ENCODE measurements at regions of chr10 and their contacts with region 1.

Region 1: GRCh38 chr10:69800109-69800508 is 1.6 kb upstream of the COL13A1 start:
- DNase-seq: no peak
- ATAC-seq: peak; percentile 56
- H3K4me3 ChIP-seq: no peak overlapping the region
- H3K27ac ChIP-seq: no peak overlapping the region
- H3K4me1 ChIP-seq: no peaks in the 10 kb centered on the region
- H3K27me3 ChIP-seq: no peaks in the 10 kb centered on the region

Region 2: GRCh38 chr10:69639291-69640195 is 160.6 kb before region 1 on chr10:
- intact Hi-C with region 1: loop called (anchors 2 to 5 kb)
- DNase-seq: peak; percentile 74 to 82
- ATAC-seq: no peak
- H3K4me3 ChIP-seq: no peak overlapping the region
- H3K27ac ChIP-seq: no peak overlapping the region
- H3K4me1 ChIP-seq: no peaks in the 10 kb centered on the region
- H3K27me3 ChIP-seq: no peaks in the 10 kb centered on the region

Region 3: GRCh38 chr10:69644658-69645295 is 155.3 kb before region 1 on chr10:
- intact Hi-C with region 1: loop called (anchors 2 to 5 kb)
- DNase-seq: peak; percentile 72 to 89
- ATAC-seq: peak; percentile 56
- H3K4me3 ChIP-seq: no peak overlapping the region
- H3K27ac ChIP-seq: no peak overlapping the region
- H3K4me1 ChIP-seq: no peaks in the 10 kb centered on the region
- H3K27me3 ChIP-seq: no peaks in the 10 kb centered on the region

Region 4: GRCh38 chr10:69731184-69731583 is 68.9 kb before region 1 on chr10:
- intact Hi-C with region 1: loop called (anchors 5 kb)
- DNase-seq: peak in 1 of 2 donors; percentile 86
- ATAC-seq: peak; percentile 58
- H3K4me3 ChIP-seq: no peak overlapping the region
- H3K27ac ChIP-seq: peak overlapping the region; percentile 7 to 93
- H3K4me1 ChIP-seq: peaks cover 0 to 3% of the 10 kb centered on the region in 2 donors
- H3K27me3 ChIP-seq: no peaks in the 10 kb centered on the region

Region 5: GRCh38 chr10:69742928-69743602 is 57.0 kb before region 1 on chr10:
- intact Hi-C with region 1: loop called in 1 of 2 experiments (anchors 2 kb)
- DNase-seq: peak in 1 of 2 donors; percentile 70
- ATAC-seq: no peak
- H3K4me3 ChIP-seq: no peak overlapping the region
- H3K27ac ChIP-seq: no peak overlapping the region
- H3K4me1 ChIP-seq: peaks cover 2 to 4% of the 10 kb centered on the region in 2 donors
- H3K27me3 ChIP-seq: no peaks in the 10 kb centered on the region

Region 6: DNA sequence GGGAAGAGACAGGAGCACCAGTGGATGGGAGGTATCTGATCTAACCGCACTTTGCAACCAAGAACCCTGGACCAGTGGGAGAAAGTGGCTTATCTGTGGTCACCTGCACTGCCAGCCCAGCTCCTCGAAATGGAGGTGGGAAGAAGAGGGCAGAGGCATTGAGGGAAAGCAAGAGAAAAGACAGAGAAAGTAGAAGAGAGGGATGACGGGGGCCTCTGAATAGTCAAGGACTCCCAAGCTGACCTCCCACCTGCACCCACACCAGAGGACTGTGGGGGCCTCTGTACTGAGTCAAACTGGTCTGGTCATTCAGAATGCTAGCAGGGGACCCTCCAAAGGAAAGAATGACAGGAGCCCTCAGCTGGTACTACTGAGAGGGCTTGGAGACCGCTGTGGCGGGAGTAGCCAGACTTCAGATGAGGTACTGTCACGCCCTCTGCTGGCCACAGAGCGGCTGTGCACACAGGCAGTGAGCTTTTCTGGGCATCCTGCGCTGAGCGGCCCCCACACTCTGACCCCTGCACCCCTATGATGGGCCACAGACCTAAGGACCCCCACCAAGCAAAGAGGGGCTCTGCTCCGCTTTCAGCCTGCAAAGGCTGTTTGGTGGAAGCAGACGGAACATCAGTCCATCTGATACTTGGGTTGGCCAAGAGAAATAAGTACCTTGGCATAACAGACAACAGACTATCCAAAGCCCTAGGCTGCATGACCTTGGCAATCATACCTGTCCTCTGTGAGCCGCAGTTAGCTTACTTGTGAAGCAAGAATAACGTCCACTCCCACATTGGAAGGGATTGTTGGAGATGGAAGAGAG is 114.5 kb after region 1 on chr10:
- intact Hi-C with region 1: loop called (anchors 5 kb)
- DNase-seq: peak; percentile 80 to 91
- ATAC-seq: peak; percentile 68
- H3K4me3 ChIP-seq: no peak overlapping the region
- H3K27ac ChIP-seq: no peak overlapping the region
- H3K4me1 ChIP-seq: peaks cover 0 to 2% of the 10 kb centered on the region in 2 donors
- H3K27me3 ChIP-seq: no peaks in the 10 kb centered on the region